ENCODE measurements at regions of chr5 and their contacts with region 1.

Region 1: DNA sequence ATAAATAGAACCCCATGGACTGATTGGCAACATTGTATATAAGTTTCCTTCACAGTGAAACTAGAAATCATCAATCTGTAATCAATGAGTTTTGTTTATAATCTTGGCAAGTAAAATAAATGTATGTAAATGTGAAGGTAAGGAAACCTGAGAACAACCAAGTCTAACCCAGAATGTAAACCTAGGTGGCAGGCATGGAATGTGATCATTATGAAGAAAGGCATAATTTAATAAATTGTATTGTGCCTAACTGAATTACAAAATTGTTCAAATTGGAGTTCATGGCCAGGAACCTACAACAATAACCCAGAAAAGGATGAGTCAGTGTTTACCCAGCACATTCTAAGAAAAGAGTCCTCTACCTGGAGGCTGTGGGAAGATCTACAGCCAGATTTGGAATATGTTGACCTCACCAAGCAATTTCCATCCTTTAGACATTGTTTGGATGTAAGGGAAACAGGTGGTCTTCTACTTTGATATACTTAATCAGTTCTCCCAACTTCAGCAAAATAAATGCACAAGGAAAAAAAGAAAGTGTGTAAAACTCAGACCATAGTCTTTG is 152.3 kb downstream of the TMEM161B start:
- DNase-seq: no peak
- ATAC-seq: no peak

Region 2: DNA sequence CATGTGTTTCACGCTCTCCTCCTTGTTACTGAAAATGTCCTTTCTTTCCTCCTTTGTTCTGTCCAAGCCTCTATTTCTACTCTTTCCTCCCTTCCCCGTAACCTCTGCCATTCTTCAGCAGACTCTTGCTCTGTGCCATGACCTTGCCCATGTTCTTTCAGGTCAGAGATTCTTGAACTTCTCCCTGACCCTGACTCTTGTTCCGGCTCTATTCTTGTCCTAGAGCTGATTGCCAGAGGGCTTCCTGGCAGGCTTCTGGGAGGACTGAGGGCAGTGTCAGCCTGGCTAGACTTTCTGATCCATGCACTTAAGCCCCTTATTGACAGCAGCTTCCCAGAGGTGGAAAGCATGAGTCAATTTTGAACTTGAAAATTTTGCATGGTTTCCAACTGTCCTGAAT is 21.9 kb before region 1 on chr5:
- intact Hi-C with region 1: loop called (anchors 1 kb)
- DNase-seq: no peak
- ATAC-seq: no peak

Measured in sciatic nerve (tissue), 2 donors.